HepG2 (cell line): ENCODE measurements at regions of chr11 and their contacts with region 1.

Region 1: GRCh38 chr11:20980736-20981135 is 311.4 kb downstream of the NELL1 start:
- DNase-seq: no peak
- ATAC-seq: no peak
- H3K4me3 ChIP-seq: no peak overlapping the region
- H3K27ac ChIP-seq: no peak overlapping the region
- H3K4me1 ChIP-seq: no peaks in the 10 kb centered on the region
- H3K27me3 ChIP-seq: no peaks in the 10 kb centered on the region
- CTCF ChIP-seq: no peak
- EP300 ChIP-seq: no peak
- POLR2A ChIP-seq: no peak
- RAD21 ChIP-seq: no peak

Region 2: DNA sequence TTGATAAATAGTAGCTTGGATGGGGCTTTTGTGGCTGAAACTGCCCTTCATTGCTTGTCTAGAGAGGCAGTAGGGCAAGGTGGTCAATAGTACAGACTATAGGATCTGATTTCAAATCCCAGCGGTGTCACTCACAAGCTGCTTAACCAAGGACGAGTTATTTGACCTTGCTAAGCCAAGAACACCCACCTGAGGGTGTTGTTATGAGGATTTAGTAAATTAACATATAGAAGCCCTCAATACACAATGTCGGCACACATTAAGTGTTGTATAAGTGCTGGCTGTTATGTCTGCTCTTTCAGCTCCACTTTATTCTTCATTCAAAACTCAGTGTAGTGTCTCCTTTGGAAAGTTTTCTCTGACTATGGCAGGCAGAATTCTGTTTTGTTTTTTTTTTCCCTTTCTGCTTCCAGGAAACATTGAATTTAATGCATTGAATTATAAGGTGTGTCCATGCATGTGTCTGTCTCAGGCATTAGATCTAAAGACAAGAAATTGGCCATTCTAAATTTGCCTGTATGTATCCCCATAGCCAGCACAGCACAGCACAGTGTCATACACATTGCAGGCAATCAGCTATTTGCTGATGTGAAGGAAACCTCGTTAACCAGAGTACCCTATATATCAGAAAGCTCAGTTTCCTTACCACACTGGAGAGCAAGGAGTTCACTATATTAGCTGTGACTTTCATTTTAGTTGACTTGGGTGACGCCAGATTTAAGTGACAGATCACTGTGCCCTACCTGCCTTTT is 99.2 kb before region 1 on chr11:
- CTCF ChIA-PET with region 1: no interaction called
- POLR2A ChIA-PET with region 1: no interaction called
- in situ Hi-C with region 1: loop called (anchors 25 kb)
- intact Hi-C with region 1: no loop called
- DNase-seq: no peak
- ATAC-seq: no peak
- H3K4me3 ChIP-seq: no peak overlapping the region
- H3K27ac ChIP-seq: no peak overlapping the region
- H3K4me1 ChIP-seq: no peaks in the 10 kb centered on the region
- H3K27me3 ChIP-seq: 0 out of 5 replicates have a peak, but pooled peaks cover 0 to 4% of the 10 kb centered on the region in 2 experiments
- CTCF ChIP-seq: no peak
- EP300 ChIP-seq: no peak
- POLR2A ChIP-seq: no peak
- RAD21 ChIP-seq: no peak